Colonic mucosa (tissue), 4 donors: ENCODE measurements at regions of chr15 and their contacts with region 1.

Region 1: GRCh38 chr15:84955089-84955848 is 26.4 kb upstream of the PDE8A start:
- DNase-seq: peak; percentile 78
- H3K4me3 ChIP-seq: peak overlapping the region; percentile 26
- H3K27ac ChIP-seq: no peak overlapping the region
- H3K4me1 ChIP-seq: no peaks in the 10 kb centered on the region
- H3K27me3 ChIP-seq: no peaks in the 10 kb centered on the region
- CTCF ChIP-seq: peak; percentile 86

Region 2: DNA sequence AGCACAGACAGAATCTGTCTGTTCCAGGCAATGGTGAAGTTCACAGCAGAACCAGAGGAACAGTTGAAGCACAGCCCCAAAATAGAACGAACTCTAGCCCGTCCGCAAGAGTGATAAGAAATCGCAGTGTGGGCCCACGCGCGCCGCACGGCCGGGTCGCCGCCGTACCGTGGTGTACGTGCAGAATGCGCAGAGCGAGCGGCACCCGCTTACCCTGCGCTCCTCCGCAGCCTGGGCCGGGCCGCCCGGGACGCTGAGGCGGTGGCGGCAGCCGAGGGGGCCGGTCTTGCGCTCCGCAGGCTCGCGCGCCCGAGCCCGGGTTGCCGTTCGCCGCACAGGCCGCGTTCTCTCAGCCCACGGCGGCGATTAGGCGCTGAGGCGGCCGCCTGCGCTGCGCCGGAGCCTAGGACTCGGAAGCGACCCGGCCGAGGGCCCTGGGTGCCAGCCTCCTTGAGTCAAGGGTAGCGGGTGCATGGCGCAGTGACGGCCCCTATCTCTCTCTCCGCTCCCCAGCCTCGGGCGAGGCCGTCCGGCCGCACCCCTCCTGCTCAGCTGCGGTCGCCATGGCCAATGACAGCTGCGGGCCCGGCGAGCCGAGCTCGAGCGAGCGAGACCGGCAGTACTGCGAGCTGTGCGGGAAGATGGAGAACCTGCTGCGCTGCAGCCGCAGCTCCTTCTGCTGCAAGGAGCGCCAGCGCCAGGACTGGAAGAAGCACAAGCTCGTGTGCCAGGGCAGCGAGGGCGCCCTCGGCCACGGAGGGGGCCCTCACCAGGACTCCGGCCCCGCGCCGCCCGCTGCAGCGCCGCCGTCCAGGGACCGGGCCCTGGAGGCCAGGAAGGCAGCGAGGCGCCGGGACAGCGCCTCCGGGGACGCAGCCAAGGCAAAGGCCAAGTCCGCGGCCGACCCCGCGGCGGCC is 321.7 kb before region 1 on chr15:
- intact Hi-C with region 1: no loop called
- DNase-seq: peak; percentile 75
- H3K4me3 ChIP-seq: peak overlapping the region; percentile 52
- H3K27ac ChIP-seq: peak overlapping the region; percentile 94
- H3K4me1 ChIP-seq: peaks cover 12% of the 10 kb centered on the region
- H3K27me3 ChIP-seq: no peaks in the 10 kb centered on the region
- CTCF ChIP-seq: no peak

Region 3: DNA sequence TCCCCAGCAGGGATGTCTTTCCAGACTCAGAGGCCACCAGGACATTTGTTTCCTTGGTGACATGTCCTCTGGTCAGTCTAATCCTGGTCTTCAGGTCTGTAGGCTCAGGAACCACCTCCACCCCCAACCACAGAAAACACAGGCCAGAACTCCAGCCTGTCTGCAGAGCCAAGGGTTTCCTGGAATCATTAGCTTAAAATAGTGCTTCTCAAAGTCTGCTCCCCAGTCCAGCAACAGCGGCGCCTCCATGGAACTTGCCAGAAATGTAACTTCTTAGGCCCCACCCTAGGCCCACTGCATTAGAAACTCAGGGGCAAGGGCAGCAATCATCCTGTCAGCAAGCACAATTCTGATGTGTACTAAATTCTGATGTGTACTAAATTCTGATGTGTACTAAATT is 50.9 kb before region 1 on chr15:
- intact Hi-C with region 1: no loop called
- DNase-seq: no peak
- H3K4me3 ChIP-seq: no peak overlapping the region
- H3K27ac ChIP-seq: no peak overlapping the region
- H3K4me1 ChIP-seq: no peaks in the 10 kb centered on the region
- H3K27me3 ChIP-seq: no peaks in the 10 kb centered on the region
- CTCF ChIP-seq: no peak

Region 4: GRCh38 chr15:85044251-85044853 is 89.1 kb after region 1 on chr15:
- intact Hi-C with region 1: loop called (anchors 2 kb)
- DNase-seq: peak; percentile 75
- H3K4me3 ChIP-seq: no peak overlapping the region
- H3K27ac ChIP-seq: no peak overlapping the region
- H3K4me1 ChIP-seq: peaks cover 4% of the 10 kb centered on the region
- H3K27me3 ChIP-seq: no peaks in the 10 kb centered on the region
- CTCF ChIP-seq: peak; percentile 46

Region 5: DNA sequence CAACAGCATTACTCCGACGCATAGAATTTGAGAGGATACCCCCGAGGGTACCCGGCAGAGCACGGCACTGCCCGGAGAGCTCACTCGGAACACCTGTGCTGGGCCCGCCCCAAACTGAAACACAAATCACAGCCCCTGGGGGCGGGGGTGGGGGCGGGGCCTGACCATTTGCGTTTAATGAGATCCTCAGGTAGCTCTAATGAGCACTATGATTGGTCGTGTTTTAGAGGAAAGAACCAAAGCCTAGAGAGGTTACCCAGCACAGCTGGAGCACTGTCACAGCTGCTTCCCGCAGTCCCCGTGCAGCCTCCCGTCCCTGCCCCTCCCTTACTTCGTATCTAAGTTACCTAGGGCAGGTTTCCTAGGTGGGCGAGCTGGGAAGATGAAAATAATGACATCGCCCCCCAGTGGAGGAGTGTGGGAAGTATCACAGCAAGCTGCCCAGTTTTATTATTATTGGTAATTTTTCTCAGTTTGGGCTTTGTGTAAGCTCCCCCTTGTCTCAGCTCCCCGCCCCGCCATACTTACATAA is 213.4 kb after region 1 on chr15:
- intact Hi-C with region 1: loop called (anchors 10 kb)
- DNase-seq: peak; percentile 61
- H3K4me3 ChIP-seq: peak overlapping the region; percentile 26
- H3K27ac ChIP-seq: no peak overlapping the region
- H3K4me1 ChIP-seq: peaks cover 7% of the 10 kb centered on the region
- H3K27me3 ChIP-seq: no peaks in the 10 kb centered on the region
- CTCF ChIP-seq: peak; percentile 38